ENCODE measurements at regions of chr11 and their contacts with region 1.

Region 1: DNA sequence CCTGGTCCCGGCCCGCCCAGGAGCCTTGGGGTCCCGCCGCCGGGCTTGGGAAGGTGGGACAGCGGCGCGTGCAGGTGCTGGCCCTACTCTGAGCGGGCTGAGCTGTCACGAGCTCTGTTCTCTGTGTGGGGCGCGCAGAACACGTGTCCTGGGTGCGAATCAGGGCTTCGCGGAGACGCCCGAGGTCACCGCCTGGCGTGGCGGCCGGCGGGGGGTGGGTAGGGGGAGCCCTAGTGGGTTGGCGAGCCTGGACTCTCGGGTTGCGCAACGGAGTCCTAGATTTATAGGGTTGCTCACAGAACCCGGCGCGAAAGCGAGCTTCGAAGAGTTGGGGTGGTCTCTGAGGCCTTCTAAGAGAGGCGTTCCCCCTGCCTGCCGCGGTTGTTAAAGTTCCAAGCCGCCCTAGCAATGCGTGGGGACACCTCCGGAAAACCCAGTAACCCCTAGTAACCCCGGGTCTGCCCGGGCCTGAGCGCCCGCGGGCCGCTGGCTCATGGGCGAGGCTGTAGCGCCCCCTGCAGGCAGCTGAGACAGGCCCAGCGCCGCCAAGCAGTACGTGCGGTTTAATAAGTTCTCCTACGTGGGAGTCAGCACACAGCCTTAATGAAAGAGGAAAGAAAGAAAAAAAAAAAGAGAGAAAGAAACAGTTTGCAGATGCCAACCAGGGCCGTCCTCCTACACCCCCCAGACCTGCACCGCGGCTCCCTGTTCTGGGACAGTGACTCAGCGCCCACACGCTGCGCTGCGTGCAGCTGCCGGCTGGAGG is 2.8 kb downstream of the ADM start:
- DNase-seq: peak; percentile 86 to 94
- H3K4me3 ChIP-seq: peak overlapping the region; percentile 73 to 80 (median 74)
- H3K27ac ChIP-seq: peak overlapping the region; percentile 67 to 97 (median 92)
- H3K4me1 ChIP-seq: peaks cover 49 to 74% (median 68%) of the 10 kb centered on the region in 4 donors
- H3K27me3 ChIP-seq: peaks cover 0 to 15% (median 9%) of the 10 kb centered on the region in 3 donors
- CTCF ChIP-seq: peak in 6 of 7 experiments; percentile 73 to 99 (median 99)
- EP300 ChIP-seq: no peak
- POLR2A ChIP-seq: peak in 1 of 4 donors; percentile 20

Region 2: DNA sequence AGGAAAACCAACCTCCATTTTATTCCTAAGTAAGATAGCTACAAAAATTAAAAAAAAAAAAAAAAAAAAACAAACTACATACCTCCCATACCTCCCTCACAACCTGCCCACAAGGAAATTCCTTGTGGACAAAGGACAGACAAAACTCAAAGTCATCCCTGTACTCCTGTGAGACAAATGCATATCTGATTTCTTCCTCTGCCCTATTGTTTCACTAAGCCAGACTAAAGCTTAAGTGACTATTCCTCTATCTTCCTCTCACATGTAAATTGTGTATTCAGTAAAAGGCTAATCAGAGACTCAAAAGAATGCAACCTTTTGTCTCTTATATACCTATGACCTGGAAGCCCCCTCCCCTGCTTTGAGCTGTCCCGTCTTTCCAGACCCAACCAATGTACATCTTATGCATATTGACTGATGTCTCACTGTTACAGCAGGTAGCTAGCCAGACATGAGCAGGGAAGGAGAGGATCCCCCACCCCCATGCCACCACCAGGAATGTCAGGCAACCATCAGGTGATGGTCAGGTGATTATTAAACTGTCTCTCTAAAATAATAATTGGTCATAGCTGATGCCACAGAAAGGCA is 303.0 kb before region 1 on chr11:
- intact Hi-C with region 1: no loop called
- DNase-seq: no peak
- H3K4me3 ChIP-seq: no peak overlapping the region
- H3K27ac ChIP-seq: no peak overlapping the region
- H3K4me1 ChIP-seq: peaks cover 0 to 9% (median 0%) of the 10 kb centered on the region in 4 donors
- H3K27me3 ChIP-seq: no peaks in the 10 kb centered on the region
- CTCF ChIP-seq: no peak
- EP300 ChIP-seq: no peak
- POLR2A ChIP-seq: no peak

Region 3: DNA sequence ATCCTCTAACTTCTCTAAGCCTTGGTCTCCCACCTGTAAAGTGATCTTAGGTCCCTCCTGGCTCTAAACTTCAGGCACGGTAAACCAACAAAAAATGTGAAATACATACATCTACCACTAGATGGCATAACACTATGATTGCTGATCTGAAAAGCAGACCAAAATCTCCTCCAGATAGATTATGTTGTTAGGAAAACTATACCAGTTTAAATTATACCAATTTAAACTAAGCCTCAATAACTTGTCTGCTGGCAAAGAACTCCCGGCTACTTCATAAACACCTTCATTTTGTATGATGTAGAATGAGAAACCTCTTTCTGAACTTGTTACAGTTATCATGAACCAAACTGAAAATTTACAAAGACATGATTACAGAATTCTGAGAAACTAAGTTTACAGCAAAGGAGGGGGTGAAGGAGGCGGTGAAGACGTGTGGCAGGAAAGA is 99.5 kb before region 1 on chr11:
- intact Hi-C with region 1: loop called (anchors 5 kb)
- DNase-seq: peak in 1 of 2 donors; percentile 67
- H3K4me3 ChIP-seq: no peak overlapping the region
- H3K27ac ChIP-seq: peak overlapping the region in 2 of 5 donors; percentile 25 to 58
- H3K4me1 ChIP-seq: peaks cover 0 to 26% (median 12%) of the 10 kb centered on the region in 4 donors
- H3K27me3 ChIP-seq: no peaks in the 10 kb centered on the region
- CTCF ChIP-seq: peak in 4 of 7 experiments; percentile 47 to 78 (median 76)
- EP300 ChIP-seq: no peak
- POLR2A ChIP-seq: no peak

Measured in stomach (tissue), 19 donors.